Ascending aorta (tissue), 2 donors: ENCODE measurements at regions of chr7 and their contacts with region 1.

Region 1: DNA sequence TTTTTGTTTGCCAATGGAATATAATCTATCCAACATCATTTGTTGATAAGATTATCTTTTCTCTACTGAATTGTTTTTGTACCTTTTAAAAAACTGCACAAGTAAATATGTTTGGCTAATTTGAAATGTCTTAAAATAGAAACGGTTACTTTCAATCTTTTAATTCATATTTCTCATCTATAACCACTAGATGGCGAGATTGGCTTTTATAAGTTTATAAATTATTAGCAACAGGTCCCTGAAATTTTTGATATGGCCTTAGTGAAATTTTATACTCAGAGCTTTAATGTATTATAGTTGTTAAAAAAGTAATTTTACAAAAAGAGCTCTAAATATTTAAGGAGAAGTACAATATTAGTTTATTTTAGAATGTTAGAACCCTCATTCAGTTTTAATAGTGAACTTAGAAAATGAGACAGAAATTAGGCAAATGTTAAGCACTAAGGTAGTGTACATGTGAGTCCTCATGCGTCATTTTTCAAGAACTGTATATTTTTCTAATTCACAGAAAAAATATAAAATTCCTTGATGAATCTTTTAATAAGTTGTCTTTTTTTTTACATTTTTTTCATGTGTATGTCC is 592.5 kb downstream of the ARL4A start:
- DNase-seq: no peak
- H3K4me3 ChIP-seq: no peak overlapping the region
- H3K27ac ChIP-seq: no peak overlapping the region
- H3K4me1 ChIP-seq: no peaks in the 10 kb centered on the region
- H3K27me3 ChIP-seq: no peaks in the 10 kb centered on the region
- CTCF ChIP-seq: peak in 1 of 3 experiments; percentile 49

Region 2: DNA sequence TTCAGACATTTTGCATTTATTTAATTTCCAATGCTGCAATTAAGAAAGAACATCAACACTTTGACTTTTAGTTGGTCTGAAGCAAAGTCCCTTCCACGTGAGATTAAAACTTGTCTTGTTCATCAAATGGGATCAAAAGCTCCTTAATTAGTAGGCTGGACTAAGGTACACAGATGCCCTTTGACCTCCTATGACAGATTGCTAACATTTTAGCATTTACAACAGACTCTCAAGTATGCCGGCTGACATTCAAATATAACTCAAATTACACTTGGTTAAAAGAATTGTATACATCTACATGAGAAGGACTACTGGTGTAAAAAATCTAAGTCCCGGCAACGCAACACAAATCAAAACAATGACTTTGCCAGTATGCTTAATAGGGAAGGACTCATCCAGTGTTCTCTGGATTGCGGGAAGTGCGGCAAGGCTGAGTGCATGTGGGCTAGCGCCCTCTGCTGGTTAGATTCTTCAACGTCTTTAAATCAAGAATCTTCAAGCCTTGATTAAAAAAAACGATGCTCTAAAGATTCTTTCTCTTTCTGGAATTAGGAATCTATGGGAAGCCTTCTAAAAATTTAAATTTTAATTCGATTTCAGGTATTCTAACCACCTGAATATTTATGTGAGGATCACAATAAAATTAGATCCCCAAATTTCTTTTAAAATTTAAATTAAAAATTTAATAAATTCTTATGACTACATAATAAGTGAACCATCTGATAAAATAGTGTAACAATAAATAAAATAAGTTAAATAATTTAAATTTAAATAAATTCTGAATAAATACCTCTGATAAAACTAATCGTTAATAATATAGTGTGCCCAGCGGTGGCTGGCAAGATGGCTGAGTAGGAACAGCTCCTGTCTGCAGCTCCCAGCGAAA is 1177.9 kb after region 1 on chr7:
- intact Hi-C with region 1: loop called (anchors 5 kb)
- DNase-seq: peak in 1 of 2 donors; percentile 65
- H3K4me3 ChIP-seq: no peak overlapping the region
- H3K27ac ChIP-seq: no peak overlapping the region
- H3K4me1 ChIP-seq: no peaks in the 10 kb centered on the region
- H3K27me3 ChIP-seq: no peaks in the 10 kb centered on the region
- CTCF ChIP-seq: peak in 2 of 3 experiments; percentile 54 to 69

Region 3: GRCh38 chr7:14691597-14692203 is 1411.8 kb after region 1 on chr7:
- intact Hi-C with region 1: loop called (anchors 5 kb)
- DNase-seq: no peak
- H3K4me3 ChIP-seq: no peak overlapping the region
- H3K27ac ChIP-seq: no peak overlapping the region
- H3K4me1 ChIP-seq: no peaks in the 10 kb centered on the region
- H3K27me3 ChIP-seq: no peaks in the 10 kb centered on the region
- CTCF ChIP-seq: peak; percentile 25 to 81 (median 73)